ENCODE measurements at regions of chr2 and their contacts with region 1.

Region 1: DNA sequence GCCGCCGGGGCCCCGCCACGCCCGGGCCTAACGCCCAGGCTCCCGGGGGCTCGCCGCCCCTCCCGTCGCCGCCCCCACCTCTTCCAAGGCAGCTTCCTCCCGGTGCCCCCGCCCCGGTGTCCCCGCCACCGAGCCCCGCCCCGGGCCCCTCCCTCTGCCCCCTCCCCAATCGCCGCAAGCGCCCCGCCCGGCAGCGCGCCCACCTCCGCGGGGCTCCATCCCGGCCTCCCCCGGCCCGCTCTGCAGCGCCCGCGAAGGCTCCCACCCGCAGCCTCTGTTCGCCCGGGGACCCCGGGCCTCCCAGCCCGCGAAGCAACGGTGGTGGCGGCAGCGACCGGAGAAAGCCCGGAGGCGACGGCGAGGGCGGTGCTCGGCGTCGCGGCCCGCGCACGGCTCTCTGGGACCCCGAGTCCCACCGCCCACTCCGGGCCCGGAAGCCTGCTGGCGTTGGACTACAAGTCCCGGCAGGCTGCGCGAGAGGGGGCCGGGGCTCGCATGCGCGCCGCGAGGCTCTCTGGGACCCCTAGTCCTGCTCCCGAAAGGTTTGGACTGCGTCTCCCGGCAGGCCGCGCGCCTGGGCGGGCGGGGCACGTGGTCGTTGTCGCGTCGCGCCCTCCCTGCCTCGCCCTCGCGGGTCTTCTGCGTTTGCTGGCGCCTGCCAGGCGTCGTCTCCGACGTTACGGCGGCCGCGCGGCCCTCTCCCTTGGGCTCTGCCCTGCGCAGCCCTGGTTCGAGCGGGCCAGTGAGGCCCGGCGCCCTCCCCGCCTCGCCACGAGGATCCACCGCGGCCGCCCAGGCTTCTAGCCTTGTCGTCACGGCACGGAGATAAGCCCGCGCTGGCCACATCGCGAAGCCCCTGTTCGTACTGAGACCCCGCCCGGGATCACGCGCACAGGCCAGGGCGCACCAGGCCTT is at the start of gene STK25:
- DNase-seq: peak; percentile 99
- H3K4me3 Mint-ChIP-seq: peak within 1 kb of the TSS; percentile 87
- H3K27ac Mint-ChIP-seq: peak within 1 kb of the TSS; percentile 72
- H3K4me1 Mint-ChIP-seq: peaks cover 13% of the 10 kb centered on the region
- H3K27me3 Mint-ChIP-seq: peaks cover 7% of the 10 kb centered on the region
- total RNA-seq, gene STK25: 121 and 145 TPM in 2 replicates

Region 2: DNA sequence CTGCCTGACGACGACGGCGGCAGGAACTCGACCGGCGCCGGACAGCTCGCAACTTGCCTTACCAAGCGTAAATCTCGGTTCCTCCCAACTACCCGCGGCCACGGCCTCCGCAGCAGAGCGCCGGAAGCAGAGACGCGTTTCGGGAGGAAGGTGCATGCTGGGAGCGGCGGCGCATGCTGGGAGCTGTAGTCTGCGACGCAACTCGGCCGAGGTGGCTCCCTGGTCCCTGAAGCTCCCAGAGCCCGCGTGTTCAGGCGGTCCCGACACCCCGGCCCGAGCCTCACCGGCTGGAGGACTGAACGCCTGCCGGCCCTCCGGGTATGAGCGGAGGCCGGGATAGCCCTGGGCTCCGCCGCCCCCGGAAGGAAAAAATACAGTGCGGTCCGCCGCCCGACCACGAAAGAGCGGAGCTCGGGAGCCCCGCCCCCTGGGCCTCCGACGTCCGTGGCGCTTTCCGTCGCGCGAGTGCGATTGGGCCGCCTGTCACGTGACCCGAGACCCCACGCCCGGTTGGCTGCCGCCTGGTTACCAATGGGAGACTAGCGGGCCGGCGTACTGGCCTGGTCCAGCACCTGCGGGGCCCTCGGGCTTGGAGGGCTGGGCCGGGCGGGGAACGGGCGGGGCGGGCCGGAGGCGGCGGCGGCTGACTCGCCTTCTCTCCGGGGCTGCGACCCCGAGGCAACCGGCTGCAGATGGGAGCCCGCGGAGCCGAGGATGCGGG is 922.1 kb before region 1 on chr2 and contains the start of gene CAPN10:
- intact Hi-C with region 1: loop called (anchors 5 kb)
- DNase-seq: peak; percentile 99
- H3K4me3 Mint-ChIP-seq: peak within 1 kb of the TSS; percentile 95
- H3K27ac Mint-ChIP-seq: peak within 1 kb of the TSS; percentile 87
- H3K4me1 Mint-ChIP-seq: peaks cover 32% of the 10 kb centered on the region
- H3K27me3 Mint-ChIP-seq: no peaks in the 10 kb centered on the region
- total RNA-seq, gene CAPN10: 48.4 and 51.9 TPM in 2 replicates

Region 3: DNA sequence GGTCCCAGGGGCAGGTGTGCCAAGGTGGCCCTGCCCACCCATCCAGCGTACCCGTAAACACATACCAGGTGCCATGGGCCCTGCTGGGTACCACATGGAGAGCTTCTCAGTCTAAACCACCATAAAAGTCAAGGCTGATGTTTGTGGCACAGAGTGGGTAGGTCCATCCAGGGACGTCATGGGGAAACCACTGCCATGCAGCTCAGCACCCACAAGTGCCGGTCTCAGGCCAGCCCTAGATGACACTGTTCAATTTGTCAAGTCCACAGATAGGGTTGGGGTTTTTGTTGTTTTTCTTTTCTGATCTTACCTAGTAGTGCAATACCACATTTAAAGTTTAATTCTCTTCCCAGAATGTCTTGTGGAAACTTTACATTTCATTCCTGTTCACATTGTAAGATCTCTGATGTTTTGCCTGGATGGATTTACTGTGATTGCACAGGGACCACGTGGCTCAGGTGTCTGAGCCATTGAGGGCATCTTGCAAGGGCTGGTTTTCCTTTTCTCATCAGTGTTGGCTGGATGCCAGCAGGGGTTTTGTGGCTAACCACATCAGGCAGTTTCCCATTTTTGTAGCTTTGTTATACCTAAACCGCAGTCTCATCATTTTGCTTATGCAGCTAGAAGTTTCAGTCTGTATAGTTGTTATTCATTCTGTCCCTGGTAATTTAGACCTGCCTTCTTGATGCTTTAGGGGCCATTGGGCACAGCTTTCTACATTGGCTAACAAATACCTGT is 64.8 kb before region 1 on chr2:
- intact Hi-C with region 1: loop called (anchors 1 kb)
- DNase-seq: peak; percentile 97
- H3K4me3 Mint-ChIP-seq: peak overlapping the region; percentile 52
- H3K27ac Mint-ChIP-seq: peak overlapping the region; percentile 80
- H3K4me1 Mint-ChIP-seq: peaks cover 23% of the 10 kb centered on the region
- H3K27me3 Mint-ChIP-seq: peaks cover 29% of the 10 kb centered on the region

Region 4: GRCh38 chr2:241609859-241610793 is 101.6 kb after region 1 on chr2:
- intact Hi-C with region 1: loop called (anchors 10 kb)
- DNase-seq: peak; percentile 98
- H3K4me3 Mint-ChIP-seq: peak overlapping the region; percentile 71
- H3K27ac Mint-ChIP-seq: peak overlapping the region; percentile 67
- H3K4me1 Mint-ChIP-seq: peaks cover 14% of the 10 kb centered on the region
- H3K27me3 Mint-ChIP-seq: no peaks in the 10 kb centered on the region